Caco-2 (cell line): ENCODE measurements at regions of chr6 and their contacts with region 1.

Region 1: GRCh38 chr6:35522660-35523658 is 10.3 kb upstream of the TULP1 start:
- DNase-seq: peak; percentile 71 to 74
- H3K4me3 ChIP-seq: no peak overlapping the region
- H3K4me3 Mint-ChIP-seq: no peak overlapping the region
- H3K27ac Mint-ChIP-seq: no peak overlapping the region
- H3K4me1 ChIP-seq: peaks cover 11% of the 10 kb centered on the region; the same call in 1 of the 2 replicates
- H3K4me1 Mint-ChIP-seq: peaks cover 7% of the 10 kb centered on the region
- H3K27me3 ChIP-seq: no peaks in the 10 kb centered on the region
- H3K27me3 Mint-ChIP-seq: no peaks in the 10 kb centered on the region
- CTCF ChIP-seq: peak; percentile 93 to 96

Region 2: GRCh38 chr6:35419417-35419816 is 103.5 kb before region 1 on chr6:
- CTCF ChIA-PET with region 1: no interaction called
- POLR2A ChIA-PET with region 1: no interaction called
- intact Hi-C with region 1: no loop called
- DNase-seq: no peak
- H3K4me3 ChIP-seq: no peak overlapping the region
- H3K4me3 Mint-ChIP-seq: no peak overlapping the region
- H3K27ac Mint-ChIP-seq: no peak overlapping the region
- H3K4me1 ChIP-seq: peaks cover 7% of the 10 kb centered on the region; the same call in 1 of the 2 replicates
- H3K4me1 Mint-ChIP-seq: peaks cover 16% of the 10 kb centered on the region
- H3K27me3 ChIP-seq: no peaks in the 10 kb centered on the region
- H3K27me3 Mint-ChIP-seq: no peaks in the 10 kb centered on the region
- CTCF ChIP-seq: peak in 1 of 2 experiments; percentile 21

Region 3: GRCh38 chr6:35552285-35552917 is 29.4 kb after region 1 on chr6:
- CTCF ChIA-PET with region 1: interaction called, 10 read pairs
- POLR2A ChIA-PET with region 1: no interaction called
- intact Hi-C with region 1: no loop called
- DNase-seq: peak in 1 of 2 experiments; percentile 39
- H3K4me3 ChIP-seq: no peak overlapping the region
- H3K4me3 Mint-ChIP-seq: no peak overlapping the region
- H3K27ac Mint-ChIP-seq: no peak overlapping the region
- H3K4me1 ChIP-seq: no peaks in the 10 kb centered on the region
- H3K4me1 Mint-ChIP-seq: peaks cover 8% of the 10 kb centered on the region
- H3K27me3 ChIP-seq: no peaks in the 10 kb centered on the region
- H3K27me3 Mint-ChIP-seq: no peaks in the 10 kb centered on the region
- CTCF ChIP-seq: peak; percentile 72 to 83

Region 4: DNA sequence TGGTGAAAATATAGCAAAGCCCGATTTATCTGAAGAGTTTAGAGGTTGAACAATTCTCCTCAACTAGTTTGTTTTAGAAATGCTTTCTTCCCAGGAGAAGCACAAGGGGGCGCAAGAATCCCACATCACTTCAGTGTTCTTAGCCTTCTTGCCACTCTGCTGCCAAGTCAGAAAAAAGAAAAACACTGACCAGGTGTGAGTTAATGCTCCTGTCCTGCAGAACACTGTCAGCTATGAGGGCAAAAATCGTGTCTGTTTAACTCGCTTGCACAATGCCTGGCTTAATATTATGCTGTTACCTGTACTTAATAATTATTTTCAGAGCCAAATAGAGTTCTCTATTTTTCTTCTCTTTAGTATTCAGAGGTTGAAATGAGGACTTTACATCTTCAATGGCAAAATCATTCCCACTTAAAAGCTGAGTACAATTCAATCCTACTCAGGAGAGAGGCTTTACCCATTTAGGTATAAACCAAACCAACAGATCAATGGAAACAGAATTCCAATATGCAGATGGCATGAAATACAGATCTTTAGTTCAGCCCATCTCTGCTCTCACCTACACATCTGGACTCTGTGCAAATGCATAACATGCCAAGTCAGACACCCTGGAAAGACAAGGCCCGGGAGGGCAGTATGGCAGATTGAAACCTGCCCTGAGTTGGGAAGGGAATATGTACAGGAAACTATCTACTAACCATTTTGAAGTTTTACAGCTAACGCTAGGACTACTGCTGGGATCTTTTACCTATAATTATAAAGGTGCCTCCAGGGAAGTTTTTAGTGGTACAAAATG is 61.1 kb after region 1 on chr6:
- CTCF ChIA-PET with region 1: no interaction called
- POLR2A ChIA-PET with region 1: no interaction called
- intact Hi-C with region 1: loop called (anchors 2 kb)
- DNase-seq: peak; percentile 54 to 75
- H3K4me3 ChIP-seq: no peak overlapping the region
- H3K4me3 Mint-ChIP-seq: no peak overlapping the region
- H3K27ac Mint-ChIP-seq: no peak overlapping the region
- H3K4me1 ChIP-seq: no peaks in the 10 kb centered on the region
- H3K4me1 Mint-ChIP-seq: no peaks in the 10 kb centered on the region
- H3K27me3 ChIP-seq: no peaks in the 10 kb centered on the region
- H3K27me3 Mint-ChIP-seq: no peaks in the 10 kb centered on the region
- CTCF ChIP-seq: peak; percentile 72 to 88

Region 5: GRCh38 chr6:35634316-35634715 is 111.4 kb after region 1 on chr6:
- CTCF ChIA-PET with region 1: no interaction called
- POLR2A ChIA-PET with region 1: no interaction called
- intact Hi-C with region 1: no loop called
- DNase-seq: no peak
- H3K4me3 ChIP-seq: no peak overlapping the region
- H3K4me3 Mint-ChIP-seq: no peak overlapping the region
- H3K27ac Mint-ChIP-seq: no peak overlapping the region
- H3K4me1 ChIP-seq: no peaks in the 10 kb centered on the region
- H3K4me1 Mint-ChIP-seq: no peaks in the 10 kb centered on the region
- H3K27me3 ChIP-seq: no peaks in the 10 kb centered on the region
- H3K27me3 Mint-ChIP-seq: no peaks in the 10 kb centered on the region
- CTCF ChIP-seq: no peak